Activated T-helper 1 cell treated with anti-CD3 and anti-CD28 coated beads, Interleukin-12 subunit alpha, Interleukin-12 subunit beta, Interleukin-2, Interleukin-4 antibody, amounts not matched to agents 30 ng/mL and 10 ng/mL and 1 ng/mL, durations not matched to agents 14 hours and 24 hours and 36 hours (primary cell): ENCODE measurements at regions of chr10 and their contacts with region 1.

Region 1: GRCh38 chr10:16646181-16647059 is 124.7 kb upstream of the C1QL3 start:
- DNase-seq: no peak
- H3K4me3 Mint-ChIP-seq: no peak overlapping the region
- H3K27ac Mint-ChIP-seq: peak overlapping the region; percentile 49
- H3K4me1 Mint-ChIP-seq: peaks cover 16% of the 10 kb centered on the region
- H3K27me3 Mint-ChIP-seq: no peaks in the 10 kb centered on the region

Region 2: GRCh38 chr10:16141499-16141898 is 504.9 kb before region 1 on chr10:
- intact Hi-C with region 1: no loop called
- DNase-seq: no peak
- H3K4me3 Mint-ChIP-seq: no peak overlapping the region
- H3K27ac Mint-ChIP-seq: no peak overlapping the region
- H3K4me1 Mint-ChIP-seq: no peaks in the 10 kb centered on the region
- H3K27me3 Mint-ChIP-seq: no peaks in the 10 kb centered on the region

Region 3: GRCh38 chr10:16545116-16545736 is 101.2 kb before region 1 on chr10:
- intact Hi-C with region 1: no loop called
- DNase-seq: no peak
- H3K4me3 Mint-ChIP-seq: no peak overlapping the region
- H3K27ac Mint-ChIP-seq: no peak overlapping the region
- H3K4me1 Mint-ChIP-seq: peaks cover 7% of the 10 kb centered on the region
- H3K27me3 Mint-ChIP-seq: peaks cover 5% of the 10 kb centered on the region

Region 4: DNA sequence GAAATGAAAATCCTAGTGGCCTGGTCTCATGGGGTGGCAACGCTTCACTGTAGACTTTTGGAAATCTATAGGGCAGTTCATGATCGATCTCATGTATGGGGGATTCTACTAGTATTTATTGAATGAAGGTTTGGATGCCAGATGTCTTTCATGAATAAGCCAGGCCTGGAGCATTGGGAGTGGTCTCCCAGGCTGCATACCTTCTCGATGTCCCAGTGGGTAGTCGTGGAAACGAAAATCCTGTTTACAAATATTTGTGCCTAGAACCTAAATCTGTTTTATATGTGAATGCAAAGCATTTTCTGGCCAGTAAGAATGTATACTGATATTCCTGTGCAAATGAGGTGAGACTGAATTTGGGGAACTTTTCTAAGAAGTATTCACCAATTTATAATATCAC is 19.7 kb before region 1 on chr10:
- intact Hi-C with region 1: no loop called
- DNase-seq: no peak
- H3K4me3 Mint-ChIP-seq: no peak overlapping the region
- H3K27ac Mint-ChIP-seq: no peak overlapping the region
- H3K4me1 Mint-ChIP-seq: no peaks in the 10 kb centered on the region
- H3K27me3 Mint-ChIP-seq: no peaks in the 10 kb centered on the region

Region 5: DNA sequence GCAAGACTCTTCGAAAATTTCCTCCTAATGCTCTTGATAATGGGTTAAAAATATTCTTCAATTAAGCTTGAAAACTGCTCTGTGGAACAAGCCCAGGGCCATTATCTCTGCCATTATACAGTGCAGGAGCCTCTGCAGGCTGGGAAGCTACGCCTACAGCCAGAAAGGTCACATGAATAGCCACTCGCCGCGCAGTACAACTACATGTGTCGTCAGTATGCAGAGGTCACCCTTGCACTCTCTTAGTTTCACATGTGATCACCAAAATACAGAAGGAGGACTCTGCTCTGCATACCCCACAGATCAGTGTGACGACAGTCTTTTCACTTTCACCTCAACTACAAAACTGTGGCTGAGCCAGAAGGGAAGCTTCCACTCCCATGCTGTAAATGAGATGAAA is 17.0 kb after region 1 on chr10:
- intact Hi-C with region 1: loop called (anchors 1 kb)
- DNase-seq: no peak
- H3K4me3 Mint-ChIP-seq: no peak overlapping the region
- H3K27ac Mint-ChIP-seq: no peak overlapping the region
- H3K4me1 Mint-ChIP-seq: peaks cover 12% of the 10 kb centered on the region
- H3K27me3 Mint-ChIP-seq: no peaks in the 10 kb centered on the region